ENCODE measurements at regions of chr2 and their contacts with region 1.

Region 1: DNA sequence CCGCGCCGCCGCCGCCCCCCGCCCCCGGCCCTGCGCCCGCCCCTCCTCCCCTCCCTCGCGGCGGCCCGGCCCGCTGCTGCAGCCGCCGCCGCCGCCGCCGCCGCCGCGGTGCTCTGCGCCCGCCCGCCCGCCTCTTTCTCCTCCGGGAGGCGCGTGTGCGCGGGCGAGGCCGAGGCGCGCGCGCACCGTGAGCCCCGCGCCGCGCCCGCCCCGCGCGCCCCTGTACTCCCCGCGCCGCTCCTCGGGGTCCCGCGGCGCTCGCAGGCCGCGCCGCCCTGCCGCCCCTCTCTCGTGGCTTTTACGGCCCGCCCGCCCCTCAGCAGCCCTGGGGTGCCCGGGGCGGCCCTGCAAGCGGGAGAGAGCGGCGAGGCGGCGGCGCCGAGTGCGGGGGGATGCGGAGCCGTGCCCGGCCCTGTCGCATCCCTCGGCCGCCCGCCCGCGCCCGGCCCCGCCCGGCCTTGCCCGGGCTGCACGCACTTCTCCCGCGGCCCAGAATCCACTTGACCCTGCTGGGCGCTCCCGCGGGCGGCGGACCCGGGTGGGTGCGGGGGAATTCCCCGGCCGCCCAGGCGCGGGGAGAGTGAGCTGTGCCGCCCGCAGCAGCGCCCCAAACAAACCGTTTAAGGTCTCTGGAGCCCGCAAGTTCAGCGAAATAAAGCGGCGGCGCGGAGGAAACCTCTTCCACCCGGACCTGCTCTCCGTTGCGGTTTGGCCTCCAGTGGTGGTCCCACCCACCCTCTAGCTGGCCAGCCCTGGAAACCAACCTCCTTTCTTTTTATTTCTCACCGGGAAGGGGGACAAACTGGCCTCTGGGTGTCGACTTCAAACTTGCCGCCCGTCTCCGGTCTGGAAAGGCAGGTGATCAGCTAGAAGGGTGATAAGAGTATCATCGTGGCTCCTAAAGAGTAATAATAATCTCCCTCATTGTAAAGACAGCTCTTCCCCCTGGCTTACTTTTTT is 37.4 kb downstream of the AFF3 start:
- DNase-seq: no peak
- H3K4me3 ChIP-seq: peak overlapping the region; percentile 52 to 94
- H3K27ac ChIP-seq: no peak overlapping the region
- H3K4me1 ChIP-seq: peaks cover 2 to 4% of the 10 kb centered on the region in 2 donors
- H3K27me3 ChIP-seq: no peaks in the 10 kb centered on the region
- CTCF ChIP-seq: no peak

Region 2: GRCh38 chr2:100197631-100198153 is 92.7 kb after region 1 on chr2:
- intact Hi-C with region 1: loop called (anchors 10 kb)
- DNase-seq: peak in 1 of 2 donors; percentile 85
- H3K4me3 ChIP-seq: peak overlapping the region in 1 of 2 donors; percentile 38
- H3K27ac ChIP-seq: peak overlapping the region; percentile 88 to 91
- H3K4me1 ChIP-seq: peaks cover 11 to 28% of the 10 kb centered on the region in 2 donors
- H3K27me3 ChIP-seq: no peaks in the 10 kb centered on the region
- CTCF ChIP-seq: no peak

Measured in ascending aorta (tissue), 2 donors.